Endothelial cell of umbilical vein (primary cell): ENCODE measurements at regions of chrX and their contacts with region 1.

Region 1: GRCh38 chrX:40735325-40736169 is at the start of gene MED14:
- DNase-seq: peak; percentile 89
- H3K4me3 ChIP-seq: peak within 1 kb of the TSS; percentile 78 to 95 (median 84)
- H3K27ac ChIP-seq: peak within 1 kb of the TSS; percentile 93
- H3K4me1 ChIP-seq: peaks cover 20% of the 10 kb centered on the region
- H3K27me3 ChIP-seq: no peaks in the 10 kb centered on the region
- CTCF ChIP-seq: peak; percentile 39 to 56
- POLR2A ChIP-seq: peak; percentile 70
- total RNA-seq, gene MED14: 55.8 and 56.4 TPM in 2 replicates

Region 2: GRCh38 chrX:40068044-40068443 is 667.5 kb before region 1 on chrX:
- CTCF ChIA-PET with region 1: no interaction called
- POLR2A ChIA-PET with region 1: no interaction called
- dilution Hi-C with region 1: no loop called
- intact Hi-C with region 1: no loop called
- DNase-seq: no peak
- H3K4me3 ChIP-seq: no peak overlapping the region
- H3K27ac ChIP-seq: no peak overlapping the region
- H3K4me1 ChIP-seq: peaks cover 4% of the 10 kb centered on the region
- H3K27me3 ChIP-seq: no peaks in the 10 kb centered on the region
- CTCF ChIP-seq: no peak
- POLR2A ChIP-seq: no peak

Region 3: GRCh38 chrX:40773809-40774208 is 38.3 kb after region 1 on chrX:
- CTCF ChIA-PET with region 1: no interaction called
- POLR2A ChIA-PET with region 1: no interaction called
- dilution Hi-C with region 1: no loop called
- intact Hi-C with region 1: loop called (anchors 1 kb)
- DNase-seq: peak; percentile 89
- H3K4me3 ChIP-seq: peak overlapping the region in 1 of 3 experiments; percentile 23
- H3K27ac ChIP-seq: peak overlapping the region; percentile 94
- H3K4me1 ChIP-seq: peaks cover 23% of the 10 kb centered on the region
- H3K27me3 ChIP-seq: no peaks in the 10 kb centered on the region
- CTCF ChIP-seq: no peak
- POLR2A ChIP-seq: no peak